ENCODE measurements at regions of chr21 and their contacts with region 1.

Region 1: GRCh38 chr21:36976882-36977651 is 10.6 kb upstream of the HLCS start:
- DNase-seq: peak; percentile 90
- H3K4me3 ChIP-seq: no peak overlapping the region
- H3K27ac ChIP-seq: no peak overlapping the region
- H3K4me1 ChIP-seq: peaks cover 6% of the 10 kb centered on the region
- H3K27me3 ChIP-seq: no peaks in the 10 kb centered on the region
- CTCF ChIP-seq: peak; percentile 95

Region 2: GRCh38 chr21:36835383-36835795 is 141.7 kb before region 1 on chr21:
- CTCF ChIA-PET with region 1: no interaction called
- POLR2A ChIA-PET with region 1: no interaction called
- intact Hi-C with region 1: no loop called
- DNase-seq: peak; percentile 31
- H3K4me3 ChIP-seq: no peak overlapping the region
- H3K27ac ChIP-seq: no peak overlapping the region
- H3K4me1 ChIP-seq: no peaks in the 10 kb centered on the region
- H3K27me3 ChIP-seq: no peaks in the 10 kb centered on the region
- CTCF ChIP-seq: no peak

Region 3: GRCh38 chr21:36917471-36918158 is 59.5 kb before region 1 on chr21:
- CTCF ChIA-PET with region 1: no interaction called
- POLR2A ChIA-PET with region 1: no interaction called
- intact Hi-C with region 1: no loop called
- DNase-seq: peak; percentile 60
- H3K4me3 ChIP-seq: no peak overlapping the region
- H3K27ac ChIP-seq: no peak overlapping the region
- H3K4me1 ChIP-seq: peaks cover 9% of the 10 kb centered on the region
- H3K27me3 ChIP-seq: no peaks in the 10 kb centered on the region
- CTCF ChIP-seq: peak; percentile 72

Region 4: GRCh38 chr21:37009740-37010341 is 32.8 kb after region 1 on chr21:
- CTCF ChIA-PET with region 1: interaction called, 23 read pairs
- POLR2A ChIA-PET with region 1: no interaction called
- intact Hi-C with region 1: no loop called
- DNase-seq: peak; percentile 94
- H3K4me3 ChIP-seq: peak overlapping the region; percentile 43
- H3K27ac ChIP-seq: peak overlapping the region; percentile 9
- H3K4me1 ChIP-seq: peaks cover 5% of the 10 kb centered on the region
- H3K27me3 ChIP-seq: no peaks in the 10 kb centered on the region
- CTCF ChIP-seq: peak; percentile 93

Region 5: DNA sequence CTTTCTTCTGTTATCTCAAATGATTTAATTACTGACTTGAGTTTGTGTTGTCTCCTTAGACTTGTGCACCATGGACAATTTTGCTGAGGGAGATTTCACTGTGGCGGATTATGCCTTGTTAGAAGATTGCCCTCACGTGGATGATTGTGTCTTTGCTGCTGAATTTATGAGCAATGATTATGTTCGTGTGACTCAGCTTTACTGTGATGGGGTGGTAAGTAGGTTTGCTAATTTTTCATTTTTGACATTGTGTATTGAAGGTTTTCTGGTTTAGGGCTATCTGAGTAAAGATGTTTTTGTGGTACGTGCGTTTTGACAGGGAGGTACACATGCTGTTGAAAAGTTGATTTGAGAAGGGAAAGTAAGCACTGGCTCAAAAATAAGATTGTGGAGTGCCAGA is 110.1 kb after region 1 on chr21:
- CTCF ChIA-PET with region 1: interaction called, 12 read pairs
- POLR2A ChIA-PET with region 1: no interaction called
- intact Hi-C with region 1: loop called (anchors 5 kb)
- DNase-seq: peak; percentile 83
- H3K4me3 ChIP-seq: no peak overlapping the region
- H3K27ac ChIP-seq: peak overlapping the region; percentile 28
- H3K4me1 ChIP-seq: peaks cover 15% of the 10 kb centered on the region
- H3K27me3 ChIP-seq: no peaks in the 10 kb centered on the region
- CTCF ChIP-seq: peak; percentile 79